Ovary (tissue), 10 donors: ENCODE measurements at regions of chr2 and their contacts with region 1.

Region 1: DNA sequence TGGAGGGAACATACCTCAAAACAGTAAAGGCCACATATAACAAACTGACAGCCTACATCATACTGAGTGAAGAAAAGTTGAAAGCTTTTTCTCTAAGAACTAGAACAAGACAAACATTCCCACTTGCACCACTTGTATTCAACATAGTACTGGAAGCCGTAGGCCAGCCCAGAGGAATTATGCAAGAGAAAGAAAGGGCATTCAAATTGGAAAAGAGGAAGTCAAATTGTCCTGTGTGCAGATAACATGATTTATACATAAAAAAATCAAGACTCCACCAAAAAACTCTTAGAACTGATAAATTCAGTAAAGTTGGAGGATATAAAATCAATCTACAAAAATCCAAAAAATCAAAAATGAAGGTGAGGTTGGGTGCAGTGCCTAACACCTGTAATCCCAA is 8.0 kb upstream of the KDM3A start:
- DNase-seq: no peak
- H3K4me3 ChIP-seq: no peak overlapping the region
- H3K27ac ChIP-seq: no peak overlapping the region
- H3K4me1 ChIP-seq: no peaks in the 10 kb centered on the region
- H3K27me3 ChIP-seq: no peaks in the 10 kb centered on the region
- CTCF ChIP-seq: no peak
- EP300 ChIP-seq: no peak
- POLR2A ChIP-seq: no peak

Region 2: GRCh38 chr2:86201671-86202335 is 231.3 kb before region 1 on chr2:
- intact Hi-C with region 1: loop called in 1 of 4 experiments (anchors 5 kb)
- DNase-seq: no peak
- H3K4me3 ChIP-seq: no peak overlapping the region
- H3K27ac ChIP-seq: no peak overlapping the region
- H3K4me1 ChIP-seq: no peaks in the 10 kb centered on the region
- H3K27me3 ChIP-seq: no peaks in the 10 kb centered on the region
- CTCF ChIP-seq: no peak
- EP300 ChIP-seq: no peak
- POLR2A ChIP-seq: no peak